ENCODE measurements at regions of chr4 and their contacts with region 1.

Region 1: GRCh38 chr4:120156120-120156718 is 89.6 kb upstream of the MAD2L1 start:
- DNase-seq: no peak
- H3K4me3 Mint-ChIP-seq: no peak overlapping the region
- H3K27ac Mint-ChIP-seq: no peak overlapping the region
- H3K4me1 Mint-ChIP-seq: no peaks in the 10 kb centered on the region
- H3K27me3 Mint-ChIP-seq: peaks cover 7% of the 10 kb centered on the region

Region 2: DNA sequence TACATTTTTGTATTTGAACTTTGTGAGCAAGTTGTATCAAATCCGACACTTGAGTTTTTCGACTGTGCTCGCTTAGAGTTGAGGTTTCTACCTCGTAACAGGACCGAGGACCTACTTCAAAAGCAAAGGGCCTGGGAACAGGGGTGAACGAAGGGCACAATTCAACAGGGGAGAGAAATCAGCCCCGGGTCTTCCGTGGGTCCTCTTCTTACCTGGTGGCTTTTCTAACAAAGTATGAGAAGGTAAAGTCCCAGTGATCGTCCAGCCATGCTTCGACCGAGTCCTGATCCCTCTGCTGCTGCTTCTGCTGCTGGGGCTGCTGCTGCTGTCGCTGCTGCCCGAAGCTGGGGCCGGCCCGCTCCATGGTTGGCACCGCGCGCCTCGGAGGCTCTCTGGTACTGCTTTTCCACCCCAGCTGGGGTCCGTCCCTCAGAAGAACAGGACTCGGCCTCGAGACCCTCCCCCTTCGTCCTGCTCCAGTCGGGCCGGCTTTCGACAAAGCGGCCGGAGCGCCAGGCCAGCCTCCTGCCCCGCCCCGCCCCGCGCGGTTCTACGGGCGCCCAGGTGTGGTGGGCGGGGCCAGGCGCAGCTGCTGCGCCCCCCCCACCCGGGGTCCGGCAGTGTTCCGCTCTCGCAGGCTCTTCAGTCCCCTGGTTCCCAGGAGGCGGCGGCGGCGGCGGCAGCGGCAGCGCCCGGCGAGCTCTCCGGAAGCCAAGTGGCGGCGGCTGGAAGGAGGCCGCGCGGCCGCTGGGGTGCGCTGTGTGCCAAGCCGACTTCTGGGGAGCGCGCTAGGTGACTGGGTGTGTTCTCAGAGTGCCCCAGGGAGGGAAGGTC is 527.7 kb before region 1 on chr4 and contains the start of gene PDE5A:
- intact Hi-C with region 1: no loop called
- DNase-seq: peak; percentile 67
- H3K4me3 Mint-ChIP-seq: peak within 1 kb of the TSS; percentile 86
- H3K27ac Mint-ChIP-seq: no peak within 1 kb of the TSS
- H3K4me1 Mint-ChIP-seq: peaks cover 23% of the 10 kb centered on the region
- H3K27me3 Mint-ChIP-seq: peaks cover 50% of the 10 kb centered on the region
- total RNA-seq, gene PDE5A: 0.10 TPM in 1 of 2 replicates, not detected in the other

Region 3: GRCh38 chr4:120066517-120067340 is 89.5 kb before region 1 on chr4 and contains the start of gene MAD2L1:
- intact Hi-C with region 1: loop called (anchors 5 kb)
- DNase-seq: peak; percentile 98
- H3K4me3 Mint-ChIP-seq: peak within 1 kb of the TSS; percentile 99
- H3K27ac Mint-ChIP-seq: peak within 1 kb of the TSS; percentile 100
- H3K4me1 Mint-ChIP-seq: peaks cover 83% of the 10 kb centered on the region
- H3K27me3 Mint-ChIP-seq: peaks cover 4% of the 10 kb centered on the region
- total RNA-seq, gene MAD2L1: 63.3 and 69.0 TPM in 2 replicates

Region 4: DNA sequence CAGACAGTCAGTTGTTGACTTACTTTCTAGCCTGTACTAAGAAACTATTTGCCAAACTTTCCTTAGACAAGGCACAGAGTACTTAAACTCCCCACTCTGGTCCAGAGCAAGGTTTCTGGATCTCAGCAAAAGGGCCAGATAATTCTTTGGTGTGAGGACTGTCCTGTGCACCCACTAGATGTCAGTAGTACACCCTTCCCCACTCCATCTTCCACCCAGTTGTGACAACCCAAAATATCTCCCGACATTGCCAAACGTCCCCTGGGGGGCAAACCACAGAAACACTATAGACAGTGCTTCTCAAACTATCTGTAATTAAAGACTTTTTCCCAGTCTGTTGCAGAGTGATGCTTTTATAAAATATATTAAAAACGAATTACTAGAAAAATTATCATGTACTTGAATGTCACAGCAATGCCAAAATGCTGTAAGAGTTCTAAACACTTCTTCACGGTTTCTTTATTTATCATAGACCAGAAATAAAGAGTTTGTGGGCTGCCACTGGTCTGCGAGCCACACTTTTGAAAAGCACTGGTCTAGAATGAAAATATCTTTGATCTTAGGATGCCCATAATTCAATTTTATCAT is 562.9 kb after region 1 on chr4:
- intact Hi-C with region 1: loop called (anchors 5 kb)
- DNase-seq: no peak
- H3K4me3 Mint-ChIP-seq: no peak overlapping the region
- H3K27ac Mint-ChIP-seq: no peak overlapping the region
- H3K4me1 Mint-ChIP-seq: no peaks in the 10 kb centered on the region
- H3K27me3 Mint-ChIP-seq: peaks cover 16% of the 10 kb centered on the region

Region 5: DNA sequence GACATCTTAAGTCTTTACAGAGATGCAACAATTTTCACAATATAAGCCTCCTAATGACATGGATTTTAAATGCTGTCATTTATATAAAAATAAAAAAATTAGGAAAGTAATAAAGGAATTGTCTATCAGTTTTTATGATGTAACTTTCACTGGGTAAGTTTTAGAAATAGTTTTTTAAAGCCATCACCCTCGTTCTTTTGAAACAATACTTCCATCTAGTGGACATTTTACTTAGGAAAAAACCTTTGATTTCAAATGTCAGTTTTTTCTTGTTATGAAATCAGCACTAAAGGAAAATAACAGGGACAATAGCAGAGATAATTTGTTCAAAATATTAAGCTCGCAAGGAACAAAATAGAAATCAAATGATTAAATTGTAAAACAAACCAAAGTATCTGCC is 940.4 kb after region 1 on chr4:
- intact Hi-C with region 1: loop called (anchors 1 kb)
- DNase-seq: no peak
- H3K4me3 Mint-ChIP-seq: no peak overlapping the region
- H3K27ac Mint-ChIP-seq: no peak overlapping the region
- H3K4me1 Mint-ChIP-seq: no peaks in the 10 kb centered on the region
- H3K27me3 Mint-ChIP-seq: peaks cover 21% of the 10 kb centered on the region

Region 6: DNA sequence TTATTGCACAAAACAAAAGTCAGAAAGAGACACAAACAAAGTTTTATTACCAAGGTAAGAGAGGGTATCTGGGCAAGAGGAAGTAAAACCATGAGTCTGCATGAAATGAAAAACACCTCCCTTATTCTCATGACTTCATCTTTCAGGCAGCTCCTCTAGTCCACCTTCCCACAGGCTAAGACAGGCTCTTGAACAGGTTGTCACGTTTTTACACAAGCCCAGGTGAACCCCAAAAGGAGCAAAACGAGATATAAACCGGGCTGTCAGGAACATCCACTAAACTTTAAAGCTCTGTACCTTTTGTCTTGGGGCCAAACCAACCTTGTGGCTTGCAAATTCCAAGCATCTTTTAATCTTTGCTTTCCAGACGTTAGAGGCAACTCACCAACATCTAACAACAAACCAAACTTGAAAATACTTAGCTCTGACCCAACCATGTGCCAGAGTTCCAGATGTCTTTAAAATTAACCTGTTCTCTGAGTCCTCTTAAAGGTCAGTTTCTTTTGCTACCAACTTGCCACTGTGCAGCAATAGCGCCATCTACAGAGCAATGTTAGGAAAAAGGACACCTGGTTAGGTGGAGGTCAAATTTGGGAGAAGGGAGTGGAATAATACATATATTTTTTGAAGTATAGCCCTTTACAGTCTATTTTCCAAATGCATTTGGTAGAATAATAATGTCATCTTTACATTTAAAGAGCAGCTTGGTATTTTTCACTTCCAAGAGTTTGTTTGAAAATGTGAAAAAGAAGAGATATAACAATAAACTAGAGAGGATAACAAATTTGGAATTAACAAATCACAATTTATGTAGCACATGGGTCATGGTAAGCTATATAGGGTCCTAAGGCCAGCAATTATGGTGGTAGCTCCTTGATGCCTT is 1151.5 kb after region 1 on chr4:
- intact Hi-C with region 1: loop called (anchors 1 kb)
- DNase-seq: peak; percentile 27
- H3K4me3 Mint-ChIP-seq: no peak overlapping the region
- H3K27ac Mint-ChIP-seq: peak overlapping the region; percentile 25
- H3K4me1 Mint-ChIP-seq: peaks cover 16% of the 10 kb centered on the region
- H3K27me3 Mint-ChIP-seq: peaks cover 14% of the 10 kb centered on the region

Region 7: GRCh38 chr4:121421594-121421993 is 1265.4 kb after region 1 on chr4:
- intact Hi-C with region 1: loop called (anchors 10 kb)
- DNase-seq: no peak
- H3K4me3 Mint-ChIP-seq: no peak overlapping the region
- H3K27ac Mint-ChIP-seq: no peak overlapping the region
- H3K4me1 Mint-ChIP-seq: no peaks in the 10 kb centered on the region
- H3K27me3 Mint-ChIP-seq: peaks cover 4% of the 10 kb centered on the region

Region 8: GRCh38 chr4:121726642-121727268 is 1570.5 kb after region 1 on chr4:
- intact Hi-C with region 1: loop called (anchors 5 kb)
- DNase-seq: no peak
- H3K4me3 Mint-ChIP-seq: no peak overlapping the region
- H3K27ac Mint-ChIP-seq: no peak overlapping the region
- H3K4me1 Mint-ChIP-seq: peaks cover 6% of the 10 kb centered on the region
- H3K27me3 Mint-ChIP-seq: peaks cover 10% of the 10 kb centered on the region